ENCODE measurements at regions of chr1 and their contacts with region 1.

Region 1: GRCh38 chr1:55868026-55868425 is 652.9 kb upstream of the USP24 start:
- DNase-seq: no peak
- ATAC-seq: no peak
- H3K4me3 ChIP-seq: no peak overlapping the region
- H3K27ac ChIP-seq: no peak overlapping the region
- H3K4me1 ChIP-seq: peaks cover 1 to 3% of the 10 kb centered on the region in 2 donors
- H3K27me3 ChIP-seq: no peaks in the 10 kb centered on the region

Region 2: DNA sequence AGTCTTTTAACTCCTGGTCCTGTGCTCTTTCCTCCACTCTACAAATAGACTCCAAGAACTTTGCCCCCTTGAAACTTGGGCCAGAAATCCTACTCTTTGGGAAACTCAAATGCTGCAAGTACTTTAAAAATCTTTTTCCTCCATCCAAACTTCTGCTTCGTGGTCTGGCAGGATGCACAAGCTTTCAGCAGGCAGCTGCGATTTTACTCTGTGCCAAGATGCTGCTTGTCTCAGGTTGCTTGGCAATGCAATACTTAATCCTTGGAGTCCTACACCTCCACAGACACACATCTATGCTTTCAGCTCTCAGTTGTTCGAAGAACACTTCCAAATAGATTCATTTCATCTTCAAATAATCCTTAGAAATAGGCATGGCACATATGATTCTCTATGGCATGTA is 217.6 kb before region 1 on chr1:
- intact Hi-C with region 1: no loop called
- DNase-seq: no peak
- ATAC-seq: no peak
- H3K4me3 ChIP-seq: no peak overlapping the region
- H3K27ac ChIP-seq: no peak overlapping the region
- H3K4me1 ChIP-seq: no peaks in the 10 kb centered on the region
- H3K27me3 ChIP-seq: no peaks in the 10 kb centered on the region

Region 3: GRCh38 chr1:55718758-55719671 is 149.0 kb before region 1 on chr1:
- intact Hi-C with region 1: loop called in 1 of 2 experiments (anchors 5 kb)
- DNase-seq: peak; percentile 75
- ATAC-seq: peak; percentile 77
- H3K4me3 ChIP-seq: no peak overlapping the region
- H3K27ac ChIP-seq: peak overlapping the region in 1 of 2 donors; percentile 76
- H3K4me1 ChIP-seq: peaks cover 5 to 11% of the 10 kb centered on the region in 2 donors
- H3K27me3 ChIP-seq: no peaks in the 10 kb centered on the region

Region 4: GRCh38 chr1:55827350-55827749 is 40.7 kb before region 1 on chr1:
- intact Hi-C with region 1: no loop called
- DNase-seq: no peak
- ATAC-seq: peak; percentile 36
- H3K4me3 ChIP-seq: no peak overlapping the region
- H3K27ac ChIP-seq: no peak overlapping the region
- H3K4me1 ChIP-seq: no peaks in the 10 kb centered on the region
- H3K27me3 ChIP-seq: no peaks in the 10 kb centered on the region

Measured in aorta (tissue), 5 donors.